PC-9 (cell line): ENCODE measurements at regions of chr17 and their contacts with region 1.

Region 1: DNA sequence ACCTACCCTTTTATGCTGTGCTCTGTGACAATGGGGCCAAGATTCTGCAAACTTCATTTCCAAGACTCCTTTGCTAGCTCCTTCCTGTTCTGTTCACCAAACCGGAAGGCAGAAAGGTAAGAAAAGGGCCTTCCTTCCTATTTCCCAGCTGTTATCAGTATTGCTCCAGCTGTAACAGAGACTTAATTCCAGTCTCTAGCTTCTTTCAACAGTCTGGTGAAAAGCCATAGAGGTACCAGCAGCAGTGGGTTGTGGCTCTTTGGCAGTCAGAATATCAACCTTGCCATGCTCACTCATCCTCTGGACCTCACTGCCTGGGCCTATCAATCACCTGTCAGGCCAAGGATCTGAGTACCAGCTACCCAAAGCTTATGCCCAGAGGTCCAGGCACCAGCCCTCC is 89.4 kb upstream of the C17orf78 start:
- DNase-seq: no peak
- H3K4me3 ChIP-seq: no peak overlapping the region
- H3K27ac ChIP-seq: no peak overlapping the region
- H3K4me1 ChIP-seq: no peaks in the 10 kb centered on the region
- H3K27me3 ChIP-seq: no peaks in the 10 kb centered on the region
- CTCF ChIP-seq: no peak

Region 2: DNA sequence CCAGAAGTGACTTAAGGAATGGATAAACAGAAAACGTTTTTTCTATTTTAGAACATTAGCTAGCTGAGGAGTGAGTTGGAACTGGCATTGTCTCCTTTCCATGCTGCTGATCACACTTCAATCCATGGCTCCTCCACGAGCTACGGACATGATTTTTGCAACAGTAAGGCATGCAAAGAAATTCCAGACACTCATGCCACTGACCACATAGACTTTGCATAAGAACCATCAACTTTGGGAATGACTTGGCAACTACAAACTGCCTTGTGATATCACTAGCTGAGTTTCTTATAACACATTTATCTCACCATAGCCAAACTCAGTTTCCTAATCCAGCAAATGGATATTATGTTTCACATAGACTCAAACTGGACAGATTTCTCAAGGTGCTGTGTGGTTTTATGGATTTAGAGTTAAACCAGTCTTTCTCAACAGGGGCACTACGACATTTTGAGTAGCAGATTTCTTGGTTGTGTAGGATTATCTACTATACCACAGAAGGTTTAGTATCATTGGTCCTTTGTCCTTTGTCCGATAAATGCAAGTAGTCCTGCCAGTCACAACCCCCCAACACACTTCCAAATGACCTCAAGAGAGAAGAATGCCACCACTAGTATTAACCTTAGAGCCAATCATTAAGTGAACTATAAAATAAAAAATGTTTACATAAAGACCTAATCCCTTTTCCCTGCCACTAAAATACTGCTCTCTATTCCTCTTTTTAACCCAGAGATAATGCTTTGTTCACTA is 41.1 kb after region 1 on chr17:
- CTCF ChIA-PET with region 1: interaction called, 16 read pairs
- POLR2A ChIA-PET with region 1: no interaction called
- intact Hi-C with region 1: no loop called
- DNase-seq: no peak
- H3K4me3 ChIP-seq: no peak overlapping the region
- H3K27ac ChIP-seq: no peak overlapping the region; the same call in 1 of the 2 replicates
- H3K4me1 ChIP-seq: no peaks in the 10 kb centered on the region
- H3K27me3 ChIP-seq: no peaks in the 10 kb centered on the region
- CTCF ChIP-seq: no peak

Region 3: GRCh38 chr17:37541880-37542660 is 255.6 kb after region 1 on chr17:
- CTCF ChIA-PET with region 1: no interaction called
- POLR2A ChIA-PET with region 1: no interaction called
- intact Hi-C with region 1: no loop called
- DNase-seq: no peak
- H3K4me3 ChIP-seq: no peak overlapping the region
- H3K27ac ChIP-seq: peak overlapping the region; percentile 17; the same call in 1 of the 2 replicates
- H3K4me1 ChIP-seq: peaks cover 6% of the 10 kb centered on the region; the same call in 1 of the 2 replicates
- H3K27me3 ChIP-seq: no peaks in the 10 kb centered on the region
- CTCF ChIP-seq: no peak